Heart right ventricle (tissue), 16 donors: ENCODE measurements at regions of chr1 and their contacts with region 1.

Region 1: GRCh38 chr1:245216366-245217115 is 61.8 kb downstream of the KIF26B start:
- DNase-seq: no peak
- ATAC-seq: no peak
- H3K4me3 ChIP-seq: no peak overlapping the region
- H3K27ac ChIP-seq: no peak overlapping the region
- H3K4me1 ChIP-seq: no peaks in the 10 kb centered on the region
- H3K27me3 ChIP-seq: peaks cover 0 to 15% (median 4%) of the 10 kb centered on the region in 7 donors
- CTCF ChIP-seq: no peak

Region 2: GRCh38 chr1:244329591-244330317 is 886.8 kb before region 1 on chr1:
- intact Hi-C with region 1: loop called in 1 of 10 experiments (anchors 5 kb)
- DNase-seq: no peak
- ATAC-seq: no peak
- H3K4me3 ChIP-seq: no peak overlapping the region
- H3K27ac ChIP-seq: no peak overlapping the region
- H3K4me1 ChIP-seq: peaks cover 0 to 10% (median 0%) of the 10 kb centered on the region in 9 donors
- H3K27me3 ChIP-seq: peaks cover 0 to 3% (median 0%) of the 10 kb centered on the region in 7 donors
- CTCF ChIP-seq: no peak